ENCODE measurements at regions of chr6 and their contacts with region 1.

Region 1: DNA sequence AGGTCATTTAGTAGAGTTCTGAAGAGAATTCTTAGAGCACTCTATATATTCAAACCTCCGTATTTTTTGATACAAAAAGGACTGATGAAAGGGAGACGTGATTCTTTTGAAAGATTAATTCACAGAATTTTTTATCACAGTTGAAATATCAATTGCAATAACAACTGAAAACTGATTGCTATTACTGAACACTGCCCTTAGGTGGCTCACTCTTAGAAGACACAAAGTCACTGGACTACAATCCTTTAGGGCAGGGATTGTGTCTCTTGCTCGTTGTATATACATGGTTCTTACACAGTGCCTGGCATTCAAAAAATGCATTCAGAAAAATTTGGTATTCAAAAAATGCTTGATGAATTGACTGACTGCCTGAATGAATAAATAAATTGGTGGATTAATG is 17.1 kb upstream of the CALHM6 start:
- DNase-seq: no peak
- ATAC-seq: peak; percentile 58

Region 2: DNA sequence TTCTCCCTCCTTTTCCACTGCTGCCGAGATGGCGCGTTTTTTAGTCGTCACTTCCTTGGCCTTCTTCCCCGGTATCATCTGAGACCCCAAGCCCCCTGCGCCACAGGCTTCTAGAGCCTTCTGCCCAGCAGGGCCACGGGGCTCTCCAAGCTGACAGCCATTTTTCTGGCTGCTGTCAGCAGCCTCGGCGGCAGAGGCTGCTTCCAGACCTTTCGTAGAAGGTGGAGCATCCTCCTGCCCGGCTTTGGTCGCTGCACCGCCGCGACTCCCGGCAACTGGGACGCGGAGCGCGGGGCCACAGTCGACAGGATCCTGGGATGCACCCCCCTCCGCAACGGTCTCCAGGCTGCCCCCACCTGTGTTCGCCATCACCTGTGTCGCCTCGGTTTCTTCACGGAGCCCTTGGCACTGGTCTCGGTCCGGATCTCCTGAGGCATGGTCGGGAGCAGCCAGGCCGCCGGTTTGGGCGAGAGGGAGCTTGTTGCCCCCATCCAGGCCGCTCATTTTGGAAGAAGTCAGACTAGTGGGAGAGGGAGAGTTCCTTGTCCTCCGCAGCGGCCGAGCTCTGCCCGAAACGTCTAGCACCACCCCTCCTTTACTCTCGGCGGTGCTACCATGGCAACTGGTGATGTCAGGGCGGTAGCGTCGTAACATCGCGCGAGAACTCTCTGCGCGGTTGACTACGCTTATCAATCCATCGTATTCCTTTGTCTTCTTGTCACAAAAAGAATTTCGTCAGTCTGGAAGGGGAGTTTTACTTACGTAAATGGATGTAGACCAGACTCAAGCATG is 190.4 kb before region 1 on chr6 and contains the start of gene TSPYL4:
- intact Hi-C with region 1: no loop called
- DNase-seq: peak; percentile 95
- ATAC-seq: peak; percentile 98
- total RNA-seq, gene TSPYL4: 29.4 TPM

Region 3: GRCh38 chr6:116298973-116299372 is 145.1 kb before region 1 on chr6:
- intact Hi-C with region 1: loop called (anchors 10 kb)
- DNase-seq: no peak
- ATAC-seq: no peak